ENCODE measurements at regions of chr1 and their contacts with region 1.

Region 1: GRCh38 chr1:42173155-42173933 is 8.8 kb upstream of the GUCA2A start:
- DNase-seq: peak; percentile 81
- ATAC-seq: peak; percentile 82
- H3K4me3 Mint-ChIP-seq: no peak overlapping the region
- H3K27ac Mint-ChIP-seq: no peak overlapping the region
- H3K4me1 Mint-ChIP-seq: no peaks in the 10 kb centered on the region
- H3K27me3 Mint-ChIP-seq: peaks cover 3% of the 10 kb centered on the region

Region 2: GRCh38 chr1:41516168-41517061 is 656.9 kb before region 1 on chr1:
- CTCF ChIA-PET with region 1: interaction called, 4 read pairs
- POLR2A ChIA-PET with region 1: no interaction called
- intact Hi-C with region 1: loop called in 1 of 2 experiments (anchors 1 kb)
- DNase-seq: peak; percentile 87
- ATAC-seq: peak; percentile 92
- H3K4me3 Mint-ChIP-seq: peak overlapping the region; percentile 19
- H3K27ac Mint-ChIP-seq: peak overlapping the region; percentile 16
- H3K4me1 Mint-ChIP-seq: peaks cover 11% of the 10 kb centered on the region
- H3K27me3 Mint-ChIP-seq: no peaks in the 10 kb centered on the region

Region 3: DNA sequence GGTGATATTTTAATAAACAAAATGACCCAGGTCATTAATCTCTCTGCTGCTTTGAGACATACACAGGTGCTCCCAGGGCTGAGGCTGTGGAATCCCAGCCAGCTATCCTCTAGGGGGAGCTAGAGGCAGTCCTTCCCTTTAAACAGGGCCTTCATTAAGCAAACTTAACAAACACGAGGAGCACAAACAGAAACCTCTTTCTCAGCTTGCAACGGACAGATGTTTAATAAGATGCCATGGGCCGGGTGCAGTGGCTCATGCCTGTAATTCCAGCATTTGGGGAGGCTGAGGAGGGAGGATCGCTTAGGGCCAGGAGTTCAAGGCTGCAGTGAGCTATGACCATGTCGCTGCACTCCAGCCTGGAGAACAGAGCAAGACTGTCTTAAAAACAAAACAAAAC is 361.3 kb before region 1 on chr1:
- CTCF ChIA-PET with region 1: interaction called, 4 read pairs
- POLR2A ChIA-PET with region 1: no interaction called
- intact Hi-C with region 1: loop called in 1 of 2 experiments (anchors 5 kb)
- DNase-seq: peak; percentile 78
- ATAC-seq: peak; percentile 68
- H3K4me3 Mint-ChIP-seq: no peak overlapping the region
- H3K27ac Mint-ChIP-seq: no peak overlapping the region
- H3K4me1 Mint-ChIP-seq: peaks cover 49% of the 10 kb centered on the region
- H3K27me3 Mint-ChIP-seq: no peaks in the 10 kb centered on the region

Region 4: DNA sequence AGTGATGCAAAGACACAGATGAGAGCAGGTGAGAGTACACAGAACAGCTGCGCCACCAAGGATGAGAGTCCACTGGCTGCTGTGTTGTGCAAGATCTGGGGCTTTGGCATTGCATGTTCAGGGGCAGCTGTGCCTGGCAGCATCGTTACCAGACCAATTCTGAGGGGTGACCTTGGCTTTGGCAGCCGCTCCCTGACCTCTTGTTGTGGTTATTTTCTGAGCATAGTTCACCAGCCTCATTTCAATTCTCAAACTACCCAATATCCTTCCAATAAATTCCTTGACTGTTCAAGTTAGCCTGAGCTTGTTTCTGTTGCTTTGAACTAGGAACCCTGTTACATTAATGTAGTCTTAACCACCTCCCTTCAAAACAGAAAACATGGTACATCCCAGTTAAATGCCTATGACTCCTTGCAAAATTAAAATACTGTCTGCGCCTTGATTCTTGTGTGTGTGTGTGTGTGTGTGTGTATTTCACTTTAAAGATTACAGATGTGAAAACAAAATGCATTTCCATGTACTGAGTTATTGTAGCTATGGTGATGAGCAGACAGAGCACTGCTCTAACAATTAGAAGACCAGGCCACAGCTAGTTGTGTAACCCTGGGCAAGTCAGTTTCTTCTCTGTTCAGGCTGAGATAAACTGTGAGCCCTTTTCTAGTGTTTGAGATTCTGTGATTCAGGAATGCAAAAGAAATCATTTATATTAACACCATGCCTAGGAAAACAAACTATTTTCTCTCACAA is 126.4 kb before region 1 on chr1:
- CTCF ChIA-PET with region 1: no interaction called
- POLR2A ChIA-PET with region 1: no interaction called
- intact Hi-C with region 1: no loop called
- DNase-seq: no peak
- ATAC-seq: no peak
- H3K4me3 Mint-ChIP-seq: no peak overlapping the region
- H3K27ac Mint-ChIP-seq: no peak overlapping the region
- H3K4me1 Mint-ChIP-seq: no peaks in the 10 kb centered on the region
- H3K27me3 Mint-ChIP-seq: peaks cover 41% of the 10 kb centered on the region

Region 5: GRCh38 chr1:42157667-42158066 is 15.7 kb before region 1 on chr1:
- CTCF ChIA-PET with region 1: interaction called, 16 read pairs
- POLR2A ChIA-PET with region 1: no interaction called
- intact Hi-C with region 1: no loop called
- DNase-seq: peak; percentile 38
- ATAC-seq: peak; percentile 66
- H3K4me3 Mint-ChIP-seq: no peak overlapping the region
- H3K27ac Mint-ChIP-seq: no peak overlapping the region
- H3K4me1 Mint-ChIP-seq: peaks cover 4% of the 10 kb centered on the region
- H3K27me3 Mint-ChIP-seq: peaks cover 2% of the 10 kb centered on the region

Region 6: GRCh38 chr1:42736150-42736850 is 563.0 kb after region 1 on chr1:
- CTCF ChIA-PET with region 1: interaction called, 4 read pairs
- POLR2A ChIA-PET with region 1: no interaction called
- intact Hi-C with region 1: loop called in 1 of 2 experiments (anchors 10 kb)
- DNase-seq: peak; percentile 23
- ATAC-seq: peak; percentile 39
- H3K4me3 Mint-ChIP-seq: no peak overlapping the region
- H3K27ac Mint-ChIP-seq: no peak overlapping the region
- H3K4me1 Mint-ChIP-seq: peaks cover 7% of the 10 kb centered on the region
- H3K27me3 Mint-ChIP-seq: no peaks in the 10 kb centered on the region